CD4-positive, alpha-beta memory T cell (primary cell): ENCODE measurements at regions of chr1 and their contacts with region 1.

Region 1: GRCh38 chr1:111690306-111690617 is 48.9 kb downstream of the INKA2 start:
- DNase-seq: no peak
- H3K4me3 ChIP-seq: no peak overlapping the region
- H3K4me3 Mint-ChIP-seq: peak overlapping the region in 2 of 8 donors; percentile 4 to 61
- H3K27ac ChIP-seq: no peak overlapping the region
- H3K27ac Mint-ChIP-seq: peak overlapping the region; percentile 2 to 76 (median 32)
- H3K4me1 ChIP-seq: peaks cover 54% of the 10 kb centered on the region
- H3K4me1 Mint-ChIP-seq: peaks cover 46 to 78% (median 67%) of the 10 kb centered on the region in 4 donors
- H3K27me3 ChIP-seq: no peaks in the 10 kb centered on the region
- H3K27me3 Mint-ChIP-seq: no peaks in the 10 kb centered on the region

Region 2: GRCh38 chr1:111672331-111672730 is 17.9 kb before region 1 on chr1:
- CTCF ChIA-PET with region 1: interaction called, 11 read pairs
- POLR2A ChIA-PET with region 1: interaction called, 5 read pairs
- intact Hi-C with region 1: no loop called
- DNase-seq: no peak
- H3K4me3 ChIP-seq: no peak overlapping the region
- H3K4me3 Mint-ChIP-seq: peak overlapping the region in 5 of 8 donors; percentile 11 to 45 (median 29)
- H3K27ac ChIP-seq: no peak overlapping the region
- H3K27ac Mint-ChIP-seq: peak overlapping the region in 5 of 7 donors; percentile 14 to 76 (median 54)
- H3K4me1 ChIP-seq: peaks cover 63% of the 10 kb centered on the region
- H3K4me1 Mint-ChIP-seq: peaks cover 56 to 87% (median 67%) of the 10 kb centered on the region in 4 donors
- H3K27me3 ChIP-seq: no peaks in the 10 kb centered on the region
- H3K27me3 Mint-ChIP-seq: no peaks in the 10 kb centered on the region